Left colon (tissue), 2 donors: ENCODE measurements at regions of chr2 and their contacts with region 1.

Region 1: DNA sequence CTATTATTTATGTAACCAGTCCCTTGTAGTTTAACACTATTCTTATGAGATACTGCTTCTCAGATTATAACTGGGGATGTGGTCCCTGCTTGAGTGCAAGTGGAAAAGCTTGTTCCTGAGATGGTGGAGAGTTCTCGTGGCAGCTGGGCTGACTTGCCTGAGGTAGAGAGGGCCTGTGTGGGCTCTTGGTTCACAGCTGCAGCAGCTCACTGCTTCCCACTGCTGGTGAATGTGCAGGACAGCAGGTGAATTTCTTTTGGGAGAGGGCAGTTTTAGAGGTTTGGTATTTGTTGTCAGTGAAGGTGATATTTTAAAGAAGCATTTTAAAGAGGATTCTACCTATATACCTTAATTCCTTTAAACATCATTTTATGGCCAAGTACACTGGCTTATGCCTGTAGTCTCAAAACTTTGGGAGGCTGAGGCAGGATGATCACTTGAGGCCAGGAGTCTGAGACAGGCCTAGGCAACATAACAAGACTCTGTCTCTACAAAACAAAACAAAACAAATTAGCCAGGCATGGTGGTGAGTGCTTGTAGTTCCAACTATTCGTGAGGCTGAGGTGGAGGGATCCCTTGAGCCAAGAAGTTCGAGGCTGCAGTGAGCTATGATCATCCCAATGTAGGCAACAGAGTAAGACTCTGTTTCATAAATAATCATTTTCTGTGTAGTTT is 94.8 kb downstream of the MTA3 start:
- DNase-seq: peak; percentile 53 to 59
- ATAC-seq: peak; percentile 97

Region 2: DNA sequence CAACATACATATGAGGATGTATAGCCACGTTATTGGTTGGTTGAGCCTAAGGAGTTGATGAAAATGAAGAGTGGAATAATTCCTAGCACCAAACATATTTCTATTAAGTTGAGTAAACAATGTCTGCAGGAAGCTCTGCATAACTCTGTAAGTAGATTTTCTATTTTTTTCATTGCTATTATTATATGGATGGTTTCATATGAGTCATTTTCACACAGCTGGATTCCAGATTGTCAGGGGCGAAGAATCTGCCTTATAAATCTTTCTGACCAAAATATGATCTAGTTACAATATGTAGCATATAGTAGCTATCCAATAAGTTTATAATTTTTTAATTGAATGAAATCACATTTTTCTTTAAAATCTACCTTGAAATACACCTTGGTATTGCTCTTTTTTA is 1083.4 kb before region 1 on chr2:
- intact Hi-C with region 1: no loop called
- DNase-seq: no peak
- ATAC-seq: no peak

Region 3: GRCh38 chr2:42494355-42495233 is 168.6 kb before region 1 on chr2:
- intact Hi-C with region 1: loop called in 1 of 2 experiments (anchors 5 kb)
- DNase-seq: peak; percentile 71 to 80
- ATAC-seq: peak; percentile 76

Region 4: GRCh38 chr2:42513257-42513918 is 149.9 kb before region 1 on chr2:
- intact Hi-C with region 1: loop called in 1 of 2 experiments (anchors 5 kb)
- DNase-seq: peak; percentile 26 to 28
- ATAC-seq: peak; percentile 95